CD4-positive, alpha-beta memory T cell (primary cell): ENCODE measurements at regions of chr7 and their contacts with region 1.

Region 1: DNA sequence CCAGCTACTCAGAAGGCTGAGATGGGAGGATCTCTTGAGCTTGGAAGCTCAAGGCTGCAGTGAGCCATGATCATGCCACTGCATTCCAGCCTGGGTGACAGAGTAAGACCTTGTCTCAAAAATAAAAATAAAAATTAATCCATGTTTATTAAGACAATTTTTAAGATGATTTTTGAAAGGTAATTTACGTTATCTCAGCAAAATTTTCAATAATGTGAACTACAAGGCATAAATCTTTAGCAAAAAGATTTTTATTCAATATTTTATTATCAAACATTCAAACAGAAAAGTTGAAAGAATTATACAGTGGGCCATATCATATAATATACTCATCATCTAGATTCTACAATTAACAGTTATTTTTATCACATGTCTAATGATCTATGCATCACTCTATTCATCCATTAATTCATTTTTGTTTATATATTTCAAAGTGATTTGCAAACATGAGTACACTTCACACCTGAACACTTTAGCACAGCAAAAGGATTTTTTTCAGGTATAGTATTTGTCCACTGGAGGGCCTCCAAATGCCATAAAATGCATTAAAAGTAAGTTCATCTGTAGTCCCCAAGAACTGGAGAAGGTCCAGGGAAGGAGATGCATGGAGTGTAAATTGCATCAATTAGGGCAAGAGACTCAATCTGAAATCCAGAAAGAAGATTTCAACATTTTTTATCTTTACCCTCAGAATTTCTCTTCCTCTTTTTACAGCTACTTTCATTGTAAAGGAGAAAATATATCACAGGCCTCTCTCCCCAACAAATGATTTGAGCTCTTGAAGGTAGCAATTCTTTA is 38.6 kb upstream of the RSBN1L start:
- DNase-seq: peak; percentile 39 to 49 (median 48)
- H3K4me3 ChIP-seq: no peak overlapping the region
- H3K4me3 Mint-ChIP-seq: no peak overlapping the region
- H3K27ac ChIP-seq: no peak overlapping the region
- H3K27ac Mint-ChIP-seq: peak overlapping the region in 1 of 7 donors; percentile 14
- H3K4me1 ChIP-seq: no peaks in the 10 kb centered on the region
- H3K4me1 Mint-ChIP-seq: no peaks in the 10 kb centered on the region
- H3K27me3 ChIP-seq: no peaks in the 10 kb centered on the region
- H3K27me3 Mint-ChIP-seq: no peaks in the 10 kb centered on the region

Region 2: DNA sequence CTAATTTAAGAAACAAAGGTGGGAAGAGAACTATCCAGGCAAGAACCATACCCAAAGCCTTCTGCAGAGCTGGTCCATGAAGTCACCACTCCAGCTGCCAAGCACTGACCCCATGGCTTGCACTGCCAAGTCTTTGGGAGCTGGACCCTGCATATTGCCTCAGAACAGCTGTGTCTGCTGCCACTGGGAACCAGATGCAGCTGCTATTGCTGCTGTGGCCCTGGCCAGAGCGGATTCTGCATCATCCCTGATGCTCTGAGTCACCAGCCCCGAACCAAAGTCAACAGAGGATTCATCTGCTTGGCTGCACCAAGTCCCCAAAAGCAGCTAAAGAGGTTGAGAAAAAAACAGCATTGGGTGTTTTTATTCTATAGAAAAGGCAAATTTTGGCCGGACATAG is 202.3 kb before region 1 on chr7:
- CTCF ChIA-PET with region 1: no interaction called
- POLR2A ChIA-PET with region 1: no interaction called
- intact Hi-C with region 1: no loop called
- DNase-seq: no peak
- H3K4me3 ChIP-seq: no peak overlapping the region
- H3K4me3 Mint-ChIP-seq: no peak overlapping the region
- H3K27ac ChIP-seq: no peak overlapping the region
- H3K27ac Mint-ChIP-seq: no peak overlapping the region
- H3K4me1 ChIP-seq: no peaks in the 10 kb centered on the region
- H3K4me1 Mint-ChIP-seq: peaks cover 0 to 1% (median 0%) of the 10 kb centered on the region in 4 donors
- H3K27me3 ChIP-seq: no peaks in the 10 kb centered on the region
- H3K27me3 Mint-ChIP-seq: peaks cover 0 to 2% of the 10 kb centered on the region in 2 donors

Region 3: GRCh38 chr7:77550586-77550985 is 107.0 kb before region 1 on chr7:
- CTCF ChIA-PET with region 1: no interaction called
- POLR2A ChIA-PET with region 1: no interaction called
- intact Hi-C with region 1: no loop called
- DNase-seq: no peak
- H3K4me3 ChIP-seq: no peak overlapping the region
- H3K4me3 Mint-ChIP-seq: no peak overlapping the region
- H3K27ac ChIP-seq: no peak overlapping the region
- H3K27ac Mint-ChIP-seq: no peak overlapping the region
- H3K4me1 ChIP-seq: peaks cover 8% of the 10 kb centered on the region
- H3K4me1 Mint-ChIP-seq: peaks cover 0 to 15% (median 14%) of the 10 kb centered on the region in 4 donors
- H3K27me3 ChIP-seq: no peaks in the 10 kb centered on the region
- H3K27me3 Mint-ChIP-seq: no peaks in the 10 kb centered on the region

Region 4: GRCh38 chr7:77696198-77697028 is 38.8 kb after region 1 on chr7 and contains the start of gene RSBN1L:
- CTCF ChIA-PET with region 1: interaction called, 5 read pairs
- POLR2A ChIA-PET with region 1: interaction called, 4 read pairs
- intact Hi-C with region 1: loop called (anchors 5 kb)
- DNase-seq: peak; percentile 98 to 99 (median 98)
- H3K4me3 ChIP-seq: peak within 1 kb of the TSS; percentile 74 to 99
- H3K4me3 Mint-ChIP-seq: peak within 1 kb of the TSS; percentile 91 to 99 (median 98)
- H3K27ac ChIP-seq: peak within 1 kb of the TSS; percentile 89
- H3K27ac Mint-ChIP-seq: peak within 1 kb of the TSS; percentile 87 to 99 (median 97)
- H3K4me1 ChIP-seq: peaks cover 49% of the 10 kb centered on the region
- H3K4me1 Mint-ChIP-seq: peaks cover 37 to 71% (median 56%) of the 10 kb centered on the region in 4 donors
- H3K27me3 ChIP-seq: no peaks in the 10 kb centered on the region
- H3K27me3 Mint-ChIP-seq: no peaks in the 10 kb centered on the region
- total RNA-seq, gene RSBN1L: 45.0 to 51.0 TPM

Region 5: GRCh38 chr7:77759294-77759889 is 101.8 kb after region 1 on chr7:
- CTCF ChIA-PET with region 1: interaction called, 176 read pairs
- POLR2A ChIA-PET with region 1: interaction called, 5 read pairs
- intact Hi-C with region 1: loop called (anchors 1 kb)
- DNase-seq: peak; percentile 68 to 79 (median 73)
- H3K4me3 ChIP-seq: no peak overlapping the region
- H3K4me3 Mint-ChIP-seq: peak overlapping the region in 1 of 8 donors; percentile 28
- H3K27ac ChIP-seq: no peak overlapping the region
- H3K27ac Mint-ChIP-seq: peak overlapping the region in 6 of 7 donors; percentile 9 to 61 (median 36)
- H3K4me1 ChIP-seq: peaks cover 33% of the 10 kb centered on the region
- H3K4me1 Mint-ChIP-seq: peaks cover 29 to 51% (median 36%) of the 10 kb centered on the region in 4 donors
- H3K27me3 ChIP-seq: no peaks in the 10 kb centered on the region
- H3K27me3 Mint-ChIP-seq: no peaks in the 10 kb centered on the region

Region 6: GRCh38 chr7:77940647-77941046 is 283.0 kb after region 1 on chr7:
- CTCF ChIA-PET with region 1: interaction called, 26 read pairs
- POLR2A ChIA-PET with region 1: no interaction called
- intact Hi-C with region 1: loop called (anchors 5 kb)
- DNase-seq: no peak
- H3K4me3 ChIP-seq: no peak overlapping the region
- H3K4me3 Mint-ChIP-seq: no peak overlapping the region
- H3K27ac ChIP-seq: no peak overlapping the region
- H3K27ac Mint-ChIP-seq: no peak overlapping the region
- H3K4me1 ChIP-seq: peaks cover 2% of the 10 kb centered on the region
- H3K4me1 Mint-ChIP-seq: peaks cover 7 to 20% (median 11%) of the 10 kb centered on the region in 4 donors
- H3K27me3 ChIP-seq: no peaks in the 10 kb centered on the region
- H3K27me3 Mint-ChIP-seq: no peaks in the 10 kb centered on the region